Activated CD4-positive, alpha-beta T cell treated with anti-CD3 and anti-CD28 coated beads for 36 hours (primary cell): ENCODE measurements at regions of chr3 and their contacts with region 1.

Region 1: GRCh38 chr3:190321789-190322603 is at the start of gene CLDN1:
- DNase-seq: peak; percentile 86
- ATAC-seq: peak; percentile 66
- H3K4me3 Mint-ChIP-seq: peak within 1 kb of the TSS; percentile 71
- H3K27ac Mint-ChIP-seq: peak within 1 kb of the TSS; percentile 24
- H3K4me1 Mint-ChIP-seq: peaks cover 41% of the 10 kb centered on the region
- H3K27me3 Mint-ChIP-seq: peaks cover 48% of the 10 kb centered on the region
- total RNA-seq, gene CLDN1: 1.6 TPM

Region 2: GRCh38 chr3:189288348-189289235 is 1033.4 kb before region 1 on chr3:
- CTCF ChIA-PET with region 1: no interaction called
- POLR2A ChIA-PET with region 1: no interaction called
- intact Hi-C with region 1: loop called in 1 of 2 experiments (anchors 10 kb)
- DNase-seq: no peak
- ATAC-seq: peak; percentile 73
- H3K4me3 Mint-ChIP-seq: peak overlapping the region; percentile 0
- H3K27ac Mint-ChIP-seq: peak overlapping the region; percentile 84
- H3K4me1 Mint-ChIP-seq: peaks cover 46% of the 10 kb centered on the region
- H3K27me3 Mint-ChIP-seq: no peaks in the 10 kb centered on the region

Region 3: DNA sequence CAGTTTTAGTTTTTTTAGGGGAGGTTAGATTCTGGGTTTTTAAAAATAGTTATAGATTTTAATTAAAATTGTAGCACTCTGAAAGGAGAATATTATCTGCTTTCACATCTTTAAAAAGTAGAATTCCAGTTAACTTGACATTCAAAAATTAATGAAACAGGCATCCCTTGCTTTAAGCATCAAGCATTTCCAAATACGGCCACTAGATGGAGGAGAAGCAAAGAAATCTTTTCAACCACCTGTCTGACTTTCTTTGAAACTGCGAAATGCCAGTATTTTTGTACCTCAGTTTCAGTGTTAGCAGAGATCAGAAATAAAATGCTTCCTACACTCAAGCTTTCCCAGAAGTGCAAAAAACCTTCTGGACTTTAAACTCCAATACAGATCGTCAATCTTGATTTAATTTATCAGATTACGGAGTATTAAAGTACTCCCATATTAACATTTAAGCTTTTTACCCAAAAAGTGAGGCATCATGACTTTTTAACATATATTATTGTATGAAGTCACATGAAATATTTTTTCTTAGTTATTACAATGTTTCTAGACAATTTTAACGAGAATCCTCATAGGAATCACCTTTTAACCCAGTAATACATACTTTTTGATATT is 354.6 kb before region 1 on chr3:
- CTCF ChIA-PET with region 1: interaction called, 4 read pairs
- POLR2A ChIA-PET with region 1: no interaction called
- intact Hi-C with region 1: loop called in 1 of 2 experiments (anchors 1 kb)
- DNase-seq: no peak
- ATAC-seq: no peak
- H3K4me3 Mint-ChIP-seq: no peak overlapping the region
- H3K27ac Mint-ChIP-seq: no peak overlapping the region
- H3K4me1 Mint-ChIP-seq: peaks cover 2% of the 10 kb centered on the region
- H3K27me3 Mint-ChIP-seq: peaks cover 7% of the 10 kb centered on the region

Region 4: DNA sequence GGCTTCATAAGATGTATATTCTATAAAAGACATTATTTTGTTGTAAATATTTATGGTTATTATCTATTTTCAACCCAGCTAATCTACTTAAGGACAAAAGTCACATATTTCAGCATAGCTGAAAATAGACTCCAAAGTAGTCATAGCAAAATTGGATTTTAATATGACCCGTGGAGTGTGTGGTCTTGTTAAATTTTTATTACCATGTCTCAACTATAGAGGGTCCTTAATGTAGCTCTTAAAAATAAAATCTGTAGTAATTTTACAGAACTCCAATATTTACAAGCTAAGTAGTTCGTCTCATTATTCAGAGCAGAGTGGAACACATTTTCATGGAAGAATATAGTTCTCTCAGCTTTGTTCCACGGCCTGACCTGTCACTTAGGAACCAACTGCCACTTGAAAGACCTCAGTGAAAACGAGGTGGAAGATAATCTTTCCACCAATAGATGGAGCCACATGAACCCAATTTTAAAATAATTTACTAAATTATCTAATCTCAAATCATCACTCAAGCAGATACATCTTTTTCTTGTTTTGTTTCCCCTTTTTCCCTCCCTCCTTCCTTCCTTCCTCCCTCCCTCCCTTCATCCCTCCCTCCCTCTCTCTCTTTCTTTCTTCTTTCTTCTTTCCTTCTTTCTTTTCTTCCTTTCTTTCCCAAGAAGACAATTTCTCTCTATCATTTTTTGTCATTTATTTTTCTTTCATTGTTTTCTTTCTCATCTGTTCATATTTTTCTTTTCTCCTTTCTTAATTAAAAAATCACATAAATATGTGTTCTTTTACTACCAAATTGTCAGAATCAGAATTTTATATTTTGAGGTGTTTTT is 96.9 kb before region 1 on chr3:
- CTCF ChIA-PET with region 1: interaction called, 16 read pairs
- POLR2A ChIA-PET with region 1: no interaction called
- intact Hi-C with region 1: loop called (anchors 1 kb)
- DNase-seq: no peak
- ATAC-seq: no peak
- H3K4me3 Mint-ChIP-seq: no peak overlapping the region
- H3K27ac Mint-ChIP-seq: no peak overlapping the region
- H3K4me1 Mint-ChIP-seq: peaks cover 3% of the 10 kb centered on the region
- H3K27me3 Mint-ChIP-seq: peaks cover 4% of the 10 kb centered on the region

Region 5: DNA sequence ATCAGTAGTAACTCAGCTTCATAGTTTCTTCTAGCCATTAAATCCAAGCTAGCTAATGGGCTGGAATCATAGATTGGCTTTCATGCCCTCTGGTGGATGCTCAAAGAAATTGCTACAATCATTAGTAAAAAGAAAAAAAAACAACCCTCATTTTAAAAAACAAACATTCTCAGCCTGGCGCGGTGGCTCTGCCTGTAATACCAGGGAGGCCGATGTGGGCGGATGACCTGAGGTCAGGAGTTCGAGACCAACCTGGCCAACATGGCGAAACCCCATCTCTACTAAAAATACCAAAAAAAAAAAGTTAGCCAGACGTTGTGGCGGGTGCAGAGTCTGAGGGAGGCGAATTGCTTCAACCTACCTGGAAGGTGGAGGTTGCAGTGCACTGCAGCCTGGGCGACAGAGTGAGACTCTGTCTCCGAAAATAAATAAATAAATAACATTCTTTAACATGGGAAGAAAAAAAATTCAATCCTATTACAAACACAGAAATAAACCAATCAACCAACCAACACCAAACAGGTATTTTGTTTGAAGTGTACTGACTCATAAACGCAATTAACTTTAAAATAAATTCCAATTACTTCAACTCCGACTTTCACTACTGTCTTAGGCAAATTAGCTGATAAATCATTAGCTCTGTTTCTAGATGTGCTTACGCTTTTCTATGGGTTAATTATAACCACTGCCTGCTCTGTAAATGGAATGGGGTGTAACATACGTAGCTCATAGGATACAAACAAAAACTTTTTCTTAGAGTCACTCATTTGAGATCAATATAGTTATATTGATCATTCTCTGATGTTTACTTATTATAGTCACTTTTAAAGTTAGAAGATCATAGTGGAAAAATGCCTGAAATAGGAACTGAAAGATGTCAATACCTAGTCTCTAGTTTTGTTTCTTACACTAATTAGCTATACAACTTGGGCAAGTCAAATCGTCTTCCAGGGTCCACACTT is 102.8 kb after region 1 on chr3:
- CTCF ChIA-PET with region 1: interaction called, 10 read pairs
- POLR2A ChIA-PET with region 1: no interaction called
- intact Hi-C with region 1: no loop called
- DNase-seq: peak; percentile 69
- ATAC-seq: peak; percentile 72
- H3K4me3 Mint-ChIP-seq: peak overlapping the region; percentile 15
- H3K27ac Mint-ChIP-seq: no peak overlapping the region
- H3K4me1 Mint-ChIP-seq: peaks cover 3% of the 10 kb centered on the region
- H3K27me3 Mint-ChIP-seq: no peaks in the 10 kb centered on the region